ENCODE measurements at regions of chr3 and their contacts with region 1.

Region 1: DNA sequence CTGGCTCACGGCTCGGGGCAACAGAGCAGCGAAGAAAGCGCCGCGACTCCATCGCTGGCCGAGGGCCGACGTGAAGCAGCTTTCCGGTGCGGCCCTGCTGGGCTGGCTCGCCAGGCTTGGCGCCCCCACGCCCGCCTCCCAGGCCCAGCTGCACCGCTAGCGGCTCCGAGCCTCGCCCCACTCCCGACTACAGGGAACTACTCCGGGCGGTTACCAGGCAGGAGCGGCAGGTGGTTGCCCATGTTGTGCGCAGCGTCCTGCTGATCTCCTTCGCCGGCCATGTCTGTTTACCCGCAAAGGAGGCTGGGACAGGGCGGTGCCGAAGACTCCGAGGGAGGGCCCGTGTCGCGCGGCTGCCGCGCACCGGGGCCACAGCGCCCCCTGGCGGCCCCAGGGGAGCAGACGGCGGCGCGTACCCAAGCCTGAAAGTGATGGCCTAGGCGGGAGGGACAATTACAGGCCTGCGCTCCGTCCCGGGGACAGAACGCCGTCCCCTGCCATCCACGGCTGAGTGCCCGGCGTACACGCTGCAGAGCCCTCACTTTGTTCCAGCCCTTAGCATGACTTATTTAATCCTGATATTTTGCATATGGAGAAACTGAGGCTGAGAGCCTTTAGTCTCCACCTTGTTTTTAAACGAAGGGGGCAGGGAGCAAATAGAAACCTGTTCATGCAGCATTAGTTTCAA is at the start of gene CRBN:
- DNase-seq: peak; percentile 72 to 85
- H3K4me3 ChIP-seq: peak within 1 kb of the TSS; percentile 86
- H3K4me1 ChIP-seq: peaks cover 10% of the 10 kb centered on the region; the same call in 1 of the 2 replicates
- H3K27me3 ChIP-seq: peaks cover 10% of the 10 kb centered on the region

Region 2: DNA sequence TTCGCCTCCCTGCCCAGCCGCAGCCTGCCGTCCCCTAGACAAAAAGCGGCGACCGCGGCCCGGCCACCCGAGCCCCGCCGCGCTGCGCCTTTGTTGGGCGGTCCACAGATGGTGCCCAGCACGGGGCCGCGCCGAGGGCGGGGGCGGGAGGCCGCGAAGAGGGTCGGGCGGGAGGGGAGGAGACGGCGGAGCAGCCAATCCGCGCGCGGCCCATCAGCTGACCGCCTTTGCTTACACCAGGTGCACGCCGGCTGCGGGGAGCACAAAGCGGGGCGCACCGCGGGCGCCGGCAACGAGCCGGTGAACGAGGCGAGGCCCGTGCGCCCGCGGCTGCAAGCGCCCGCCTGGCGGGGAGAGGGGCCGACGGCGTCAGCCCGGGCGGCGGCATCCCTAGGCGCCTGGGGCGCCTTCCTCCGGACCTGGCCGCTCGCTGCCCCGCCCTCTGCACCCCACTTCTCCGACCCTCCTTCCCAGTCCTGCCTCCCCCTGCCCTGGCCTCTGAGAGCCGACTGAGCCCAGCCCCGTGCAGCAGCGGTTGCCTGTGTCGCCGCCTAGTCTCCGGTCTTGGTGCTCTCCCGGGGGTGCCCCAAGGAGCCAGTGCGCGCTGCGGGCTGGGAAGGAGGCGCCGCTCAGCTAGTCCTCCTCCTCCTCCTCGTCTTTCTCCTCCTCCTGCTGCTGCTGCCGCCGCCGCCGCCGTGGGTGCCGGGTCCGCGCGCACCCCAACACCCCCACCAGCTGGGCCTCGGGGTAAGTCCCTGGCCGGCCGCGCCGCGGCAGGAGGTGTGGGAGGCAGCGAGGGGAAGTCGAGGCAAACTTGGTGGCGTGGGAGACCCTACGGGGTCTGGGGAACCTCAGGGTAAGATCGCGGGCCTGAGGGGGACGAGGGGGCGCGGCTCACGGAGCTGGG is 619.9 kb after region 1 on chr3 and contains the start of gene LRRN1:
- in situ Hi-C with region 1: loop called (anchors 25 kb)
- DNase-seq: peak; percentile 60 to 90
- H3K4me3 ChIP-seq: peak within 1 kb of the TSS; percentile 57
- H3K4me1 ChIP-seq: peaks cover 27% of the 10 kb centered on the region
- H3K27me3 ChIP-seq: no peaks in the 10 kb centered on the region

Measured in HAP-1 (cell line).